ENCODE measurements at regions of chr6 and their contacts with region 1.

Region 1: GRCh38 chr6:1424306-1424928 is 35.0 kb downstream of the FOXF2 start:
- DNase-seq: peak; percentile 68
- ATAC-seq: peak; percentile 97
- H3K4me3 Mint-ChIP-seq: no peak overlapping the region
- H3K27ac Mint-ChIP-seq: no peak overlapping the region
- H3K4me1 Mint-ChIP-seq: peaks cover 11% of the 10 kb centered on the region
- H3K27me3 Mint-ChIP-seq: peaks cover 6% of the 10 kb centered on the region; the same call in 1 of the 2 replicates
- CTCF ChIP-seq: no peak; the same call in 1 of the 2 replicates

Region 2: GRCh38 chr6:1247894-1248293 is 176.5 kb before region 1 on chr6:
- CTCF ChIA-PET with region 1: no interaction called
- POLR2A ChIA-PET with region 1: no interaction called
- DNase-seq: no peak
- ATAC-seq: no peak
- H3K4me3 Mint-ChIP-seq: no peak overlapping the region
- H3K27ac Mint-ChIP-seq: no peak overlapping the region
- H3K4me1 Mint-ChIP-seq: peaks cover 5% of the 10 kb centered on the region; the same call in 1 of the 2 replicates
- H3K27me3 Mint-ChIP-seq: no peaks in the 10 kb centered on the region
- CTCF ChIP-seq: no peak

Region 3: DNA sequence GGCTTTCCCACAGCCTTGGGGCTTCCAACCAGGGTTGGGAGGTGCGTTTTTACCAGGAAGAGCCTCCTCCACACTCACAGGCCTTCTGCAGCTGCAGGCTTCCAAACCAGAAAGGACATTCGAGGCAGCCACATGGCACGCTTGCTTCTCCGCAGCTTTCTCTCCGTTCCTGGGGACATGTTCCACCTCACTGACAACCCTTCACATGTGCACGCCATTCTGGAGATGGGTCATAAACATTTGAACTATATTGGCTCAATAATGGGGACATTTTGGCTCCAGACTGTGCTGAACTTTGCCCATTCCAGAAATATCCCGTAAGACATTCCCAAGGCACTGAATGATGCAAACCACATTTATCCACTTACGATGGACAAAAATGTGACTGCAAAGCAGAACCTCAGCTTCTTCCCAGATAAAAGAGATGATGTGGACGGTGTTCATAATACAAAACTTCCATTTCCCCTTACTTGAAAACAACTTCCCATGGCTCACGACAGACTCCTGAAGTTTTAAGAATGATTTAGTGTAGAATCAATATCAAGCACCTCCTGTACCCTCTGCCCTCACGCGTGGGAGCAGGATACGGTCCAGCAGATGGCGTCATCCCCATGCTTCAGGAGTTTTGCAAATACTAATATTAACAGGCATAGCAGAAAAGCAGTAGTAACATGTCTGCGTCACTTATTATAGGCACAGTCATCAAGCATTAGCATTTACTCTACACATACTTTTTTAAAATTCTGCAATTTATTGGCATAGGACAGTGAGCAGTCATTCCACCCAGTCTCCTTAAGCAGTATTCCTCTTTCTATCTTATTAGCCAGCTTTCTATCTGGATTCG is 60.5 kb before region 1 on chr6:
- CTCF ChIA-PET with region 1: interaction called, 12 read pairs
- POLR2A ChIA-PET with region 1: no interaction called
- DNase-seq: peak; percentile 36
- ATAC-seq: peak; percentile 65
- H3K4me3 Mint-ChIP-seq: no peak overlapping the region
- H3K27ac Mint-ChIP-seq: no peak overlapping the region
- H3K4me1 Mint-ChIP-seq: peaks cover 10% of the 10 kb centered on the region
- H3K27me3 Mint-ChIP-seq: peaks cover 10% of the 10 kb centered on the region
- CTCF ChIP-seq: no peak

Region 4: GRCh38 chr6:1396952-1397868 is 27.2 kb before region 1 on chr6:
- CTCF ChIA-PET with region 1: interaction called, 20 read pairs
- POLR2A ChIA-PET with region 1: no interaction called
- DNase-seq: peak; percentile 80
- ATAC-seq: no peak
- H3K4me3 Mint-ChIP-seq: no peak overlapping the region
- H3K27ac Mint-ChIP-seq: no peak overlapping the region
- H3K4me1 Mint-ChIP-seq: peaks cover 35% of the 10 kb centered on the region
- H3K27me3 Mint-ChIP-seq: peaks cover 83% of the 10 kb centered on the region
- CTCF ChIP-seq: peak; percentile 95

Region 5: DNA sequence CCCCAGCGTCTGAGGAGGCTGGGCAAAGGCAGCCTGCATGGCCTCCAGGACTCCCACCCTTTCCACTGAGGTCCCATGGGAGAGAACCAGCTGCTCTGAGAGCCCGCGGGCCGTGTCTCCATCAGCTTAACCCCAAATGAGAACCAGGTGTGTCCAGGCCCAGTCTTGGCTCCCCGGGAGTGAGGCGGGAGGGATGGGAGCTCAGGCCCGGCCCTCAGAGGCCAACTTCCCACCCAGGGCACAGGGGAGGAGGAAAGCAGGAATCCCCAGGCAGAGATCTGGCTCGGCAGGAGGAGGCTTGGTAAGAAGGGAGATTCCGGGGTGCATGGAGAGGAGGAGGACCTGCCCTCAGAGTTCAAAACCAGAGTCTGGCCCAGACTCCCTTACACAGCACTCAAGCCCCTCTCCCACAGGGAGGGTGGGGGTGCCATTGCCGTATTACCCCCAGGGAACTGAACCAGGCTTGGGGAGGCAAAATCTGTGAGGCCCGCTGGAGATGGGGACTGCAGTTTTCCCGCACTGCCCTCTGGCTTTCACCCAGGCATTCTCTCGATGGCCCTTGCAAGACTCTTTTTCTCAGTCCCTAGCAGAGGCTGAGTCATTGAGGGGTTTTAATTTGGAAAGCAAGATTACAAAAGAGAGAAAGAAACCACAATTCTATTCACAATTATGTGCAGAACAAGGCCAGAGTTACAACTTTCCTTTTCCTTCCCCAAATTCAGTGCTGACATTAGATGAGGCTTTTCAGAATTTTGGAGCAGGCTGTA is 17.9 kb before region 1 on chr6:
- CTCF ChIA-PET with region 1: interaction called, 16 read pairs
- POLR2A ChIA-PET with region 1: no interaction called
- DNase-seq: no peak
- ATAC-seq: no peak
- H3K4me3 Mint-ChIP-seq: no peak overlapping the region
- H3K27ac Mint-ChIP-seq: no peak overlapping the region
- H3K4me1 Mint-ChIP-seq: peaks cover 23% of the 10 kb centered on the region
- H3K27me3 Mint-ChIP-seq: peaks cover 16% of the 10 kb centered on the region
- CTCF ChIP-seq: no peak

Region 6: GRCh38 chr6:1436334-1437306 is 12.2 kb after region 1 on chr6:
- CTCF ChIA-PET with region 1: interaction called, 67 read pairs
- POLR2A ChIA-PET with region 1: no interaction called
- DNase-seq: peak; percentile 52
- ATAC-seq: peak; percentile 88
- H3K4me3 Mint-ChIP-seq: no peak overlapping the region
- H3K27ac Mint-ChIP-seq: no peak overlapping the region
- H3K4me1 Mint-ChIP-seq: peaks cover 20% of the 10 kb centered on the region
- H3K27me3 Mint-ChIP-seq: peaks cover 11% of the 10 kb centered on the region
- CTCF ChIP-seq: peak; percentile 65; the same call in 1 of the 2 replicates